Right ventricle myocardium inferior (tissue), 1 donor: ENCODE measurements at regions of chr9 and their contacts with region 1.

Region 1: GRCh38 chr9:84731696-84732095 is 62.2 kb downstream of the NTRK2 start:
- DNase-seq: no peak
- ATAC-seq: no peak

Region 2: DNA sequence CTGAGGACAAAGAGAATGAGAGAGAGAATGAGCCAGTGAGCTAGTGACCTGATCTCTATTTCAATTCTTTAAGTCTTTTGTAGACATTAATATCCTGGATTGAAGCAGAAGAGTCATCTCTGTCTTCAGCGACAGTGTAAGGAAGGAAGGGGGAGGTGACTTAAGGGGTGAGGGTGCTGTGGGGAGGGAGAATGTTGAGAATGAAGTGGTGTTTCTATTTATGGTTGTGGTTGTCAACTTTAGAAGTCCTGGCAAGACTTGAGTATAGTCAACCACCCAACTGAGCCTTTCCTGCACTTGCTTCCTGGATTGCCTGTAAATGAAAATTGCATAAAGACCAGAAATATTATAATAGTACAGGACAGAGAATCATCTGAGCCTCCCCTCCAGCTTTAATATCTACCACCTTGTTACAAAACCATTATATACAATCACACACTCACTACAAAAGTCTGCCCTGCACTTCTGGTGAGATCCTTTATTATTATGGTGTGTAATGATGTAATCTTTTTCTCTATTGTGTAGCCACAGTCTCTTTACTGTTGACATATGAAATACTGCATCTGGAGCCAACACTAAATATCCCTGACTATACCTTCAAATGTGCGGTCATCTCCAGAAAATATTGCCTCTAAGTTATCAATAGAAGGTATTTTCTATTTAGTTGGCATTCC is 29.6 kb after region 1 on chr9:
- intact Hi-C with region 1: loop called (anchors 5 kb)
- DNase-seq: no peak
- ATAC-seq: no peak